ENCODE measurements at regions of chr4 and their contacts with region 1.

Region 1: GRCh38 chr4:95549246-95550114 is 707 bp upstream of the UNC5C start:
- DNase-seq: peak in 1 of 2 donors; percentile 49
- H3K4me3 ChIP-seq: peak overlapping the region; percentile 59 to 86 (median 66)
- H3K27ac ChIP-seq: peak overlapping the region; percentile 79 to 90
- H3K4me1 ChIP-seq: no peaks in the 10 kb centered on the region
- H3K27me3 ChIP-seq: peaks cover 4 to 20% of the 10 kb centered on the region in 2 donors
- CTCF ChIP-seq: no peak
- POLR2A ChIP-seq: no peak

Region 2: GRCh38 chr4:95510145-95510544 is 39.3 kb before region 1 on chr4:
- intact Hi-C with region 1: loop called (anchors 5 kb)
- DNase-seq: no peak
- H3K4me3 ChIP-seq: no peak overlapping the region
- H3K27ac ChIP-seq: no peak overlapping the region
- H3K4me1 ChIP-seq: peaks cover 0 to 7% of the 10 kb centered on the region in 2 donors
- H3K27me3 ChIP-seq: no peaks in the 10 kb centered on the region
- CTCF ChIP-seq: peak; percentile 29 to 51 (median 31)
- POLR2A ChIP-seq: no peak

Region 3: DNA sequence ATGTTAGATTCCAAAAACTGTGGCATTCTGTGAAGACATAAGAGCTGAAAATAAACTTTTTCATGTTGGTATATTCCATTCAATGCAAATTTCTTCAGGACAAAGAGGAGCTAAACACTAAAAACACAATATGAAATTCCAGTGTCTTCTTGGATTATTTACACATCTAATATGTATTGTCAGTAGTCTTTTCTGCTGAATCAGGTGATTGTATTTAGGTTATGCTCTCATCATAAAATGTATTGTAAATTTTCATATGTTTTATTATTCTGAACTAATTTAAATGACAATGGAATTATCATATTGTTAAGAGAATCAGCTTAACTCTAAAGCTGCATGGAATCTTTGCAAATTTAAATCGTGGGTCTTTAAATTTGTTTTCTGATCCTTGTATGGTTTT is 817.2 kb after region 1 on chr4:
- intact Hi-C with region 1: no loop called
- DNase-seq: no peak
- H3K4me3 ChIP-seq: no peak overlapping the region
- H3K27ac ChIP-seq: no peak overlapping the region
- H3K4me1 ChIP-seq: no peaks in the 10 kb centered on the region
- H3K27me3 ChIP-seq: no peaks in the 10 kb centered on the region
- CTCF ChIP-seq: no peak
- POLR2A ChIP-seq: no peak